Gastrocnemius medialis (tissue), 4 donors: ENCODE measurements at regions of chr6 and their contacts with region 1.

Region 1: GRCh38 chr6:109705258-109705657 is 14.2 kb downstream of the FIG4 start:
- DNase-seq: peak; percentile 51 to 52
- ATAC-seq: peak; percentile 96 to 98
- H3K4me3 ChIP-seq: no peak overlapping the region
- H3K27ac ChIP-seq: no peak overlapping the region
- H3K4me1 ChIP-seq: peaks cover 3 to 9% of the 10 kb centered on the region in 2 donors
- H3K27me3 ChIP-seq: no peaks in the 10 kb centered on the region
- CTCF ChIP-seq: peak; percentile 76 to 94 (median 87)
- POLR2A ChIP-seq: no peak

Region 2: DNA sequence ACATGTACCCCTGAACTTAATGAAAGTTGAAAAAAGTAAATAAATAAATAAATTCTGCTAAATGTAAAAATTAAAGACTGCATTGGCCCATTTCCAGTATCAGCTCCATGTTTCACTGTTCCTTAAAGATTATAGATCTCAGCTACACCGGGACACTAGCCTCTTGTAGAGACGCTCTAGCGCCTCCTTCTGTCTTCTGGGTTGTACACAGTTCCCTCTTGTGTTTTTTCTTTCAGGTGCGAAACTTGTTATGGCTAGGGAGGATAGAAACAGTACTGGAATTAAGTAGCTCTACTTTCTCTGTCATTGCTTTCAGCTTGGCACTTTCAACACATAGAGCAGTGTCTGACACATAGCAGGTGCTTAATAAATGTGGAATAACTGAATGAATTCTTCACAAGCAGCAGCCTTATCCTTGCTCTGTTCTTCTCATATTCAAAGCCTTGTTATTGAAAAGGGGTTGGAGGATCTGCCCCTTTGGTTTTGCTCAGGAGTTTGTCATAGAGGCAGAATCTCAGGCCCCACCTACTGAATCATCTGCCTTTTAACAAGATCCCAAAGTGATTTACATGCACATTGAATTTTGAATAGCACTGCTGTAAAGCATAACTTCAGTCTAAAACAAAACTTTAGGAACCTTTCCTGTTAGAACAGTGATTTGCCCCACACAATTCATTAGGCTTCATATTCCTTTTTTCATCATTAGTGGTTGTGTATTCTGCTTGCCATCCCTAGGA is 78.2 kb after region 1 on chr6:
- in situ Hi-C with region 1: no loop called
- intact Hi-C with region 1: loop called (anchors 5 kb)
- DNase-seq: no peak
- ATAC-seq: no peak
- H3K4me3 ChIP-seq: no peak overlapping the region
- H3K27ac ChIP-seq: no peak overlapping the region
- H3K4me1 ChIP-seq: no peaks in the 10 kb centered on the region
- H3K27me3 ChIP-seq: no peaks in the 10 kb centered on the region
- CTCF ChIP-seq: peak in 2 of 5 experiments; percentile 5 to 35
- POLR2A ChIP-seq: no peak

Region 3: DNA sequence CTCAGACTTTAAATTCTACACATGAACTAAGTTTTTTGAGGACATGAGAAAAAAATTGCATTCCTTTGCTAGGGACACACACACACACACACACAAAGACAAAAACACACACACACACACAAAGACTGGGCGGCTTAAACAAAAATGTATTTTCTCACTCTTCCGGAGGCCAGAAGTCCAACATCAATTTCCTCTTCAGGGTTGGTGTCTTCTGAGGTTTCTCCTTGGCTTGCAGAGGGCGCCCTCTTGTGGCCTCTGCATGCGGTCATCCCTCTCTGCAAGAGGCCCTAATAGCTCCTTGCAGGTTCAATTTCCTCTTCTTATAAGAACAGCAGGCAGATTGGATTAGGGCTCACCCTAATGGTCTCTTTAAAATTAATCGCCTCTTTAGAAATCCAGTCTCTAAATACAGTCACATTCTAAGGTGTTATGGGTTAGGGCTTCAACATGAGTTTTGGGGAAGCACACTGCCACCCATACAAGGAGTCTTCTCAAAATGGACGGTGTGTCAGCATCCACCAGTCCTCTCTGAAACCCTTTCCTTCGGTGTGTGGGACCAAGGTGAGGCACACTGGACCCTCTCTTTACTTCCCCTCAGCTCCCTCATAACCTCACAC is 334.2 kb after region 1 on chr6:
- in situ Hi-C with region 1: loop called (anchors 5 to 10 kb)
- intact Hi-C with region 1: loop called (anchors 1 kb)
- DNase-seq: peak; percentile 46 to 59
- ATAC-seq: peak; percentile 80 to 82
- H3K4me3 ChIP-seq: no peak overlapping the region
- H3K27ac ChIP-seq: no peak overlapping the region
- H3K4me1 ChIP-seq: no peaks in the 10 kb centered on the region
- H3K27me3 ChIP-seq: no peaks in the 10 kb centered on the region
- CTCF ChIP-seq: peak; percentile 48 to 89 (median 73)
- POLR2A ChIP-seq: no peak

Region 4: GRCh38 chr6:110398778-110399177 is 693.5 kb after region 1 on chr6:
- in situ Hi-C with region 1: loop called in 2 of 4 experiments (anchors 10 to 25 kb)
- intact Hi-C with region 1: loop called (anchors 10 kb)
- DNase-seq: no peak
- ATAC-seq: no peak
- H3K4me3 ChIP-seq: no peak overlapping the region
- H3K27ac ChIP-seq: no peak overlapping the region
- H3K4me1 ChIP-seq: no peaks in the 10 kb centered on the region
- H3K27me3 ChIP-seq: no peaks in the 10 kb centered on the region
- CTCF ChIP-seq: no peak
- POLR2A ChIP-seq: no peak